ENCODE measurements at regions of chr7 and their contacts with region 1.

Region 1: GRCh38 chr7:96219382-96220130 is 102.3 kb downstream of the SLC25A13 start:
- DNase-seq: peak; percentile 41 to 95
- H3K4me3 ChIP-seq: no peak overlapping the region
- H3K27ac ChIP-seq: peak overlapping the region; percentile 77
- H3K4me1 ChIP-seq: peaks cover 41% of the 10 kb centered on the region
- H3K27me3 ChIP-seq: no peaks in the 10 kb centered on the region
- CTCF ChIP-seq: no peak

Region 2: GRCh38 chr7:96135271-96135670 is 84.3 kb before region 1 on chr7:
- CTCF ChIA-PET with region 1: no interaction called
- POLR2A ChIA-PET with region 1: no interaction called
- intact Hi-C with region 1: loop called (anchors 5 kb)
- DNase-seq: peak; percentile 49 to 97
- H3K4me3 ChIP-seq: no peak overlapping the region
- H3K27ac ChIP-seq: peak overlapping the region; percentile 77
- H3K4me1 ChIP-seq: peaks cover 30% of the 10 kb centered on the region
- H3K27me3 ChIP-seq: no peaks in the 10 kb centered on the region
- CTCF ChIP-seq: no peak